Cardiac septum (tissue), 1 donor: ENCODE measurements at regions of chr4 and their contacts with region 1.

Region 1: GRCh38 chr4:147019061-147019460 is 73.4 kb upstream of the TTC29 start:
- DNase-seq: no peak

Region 2: DNA sequence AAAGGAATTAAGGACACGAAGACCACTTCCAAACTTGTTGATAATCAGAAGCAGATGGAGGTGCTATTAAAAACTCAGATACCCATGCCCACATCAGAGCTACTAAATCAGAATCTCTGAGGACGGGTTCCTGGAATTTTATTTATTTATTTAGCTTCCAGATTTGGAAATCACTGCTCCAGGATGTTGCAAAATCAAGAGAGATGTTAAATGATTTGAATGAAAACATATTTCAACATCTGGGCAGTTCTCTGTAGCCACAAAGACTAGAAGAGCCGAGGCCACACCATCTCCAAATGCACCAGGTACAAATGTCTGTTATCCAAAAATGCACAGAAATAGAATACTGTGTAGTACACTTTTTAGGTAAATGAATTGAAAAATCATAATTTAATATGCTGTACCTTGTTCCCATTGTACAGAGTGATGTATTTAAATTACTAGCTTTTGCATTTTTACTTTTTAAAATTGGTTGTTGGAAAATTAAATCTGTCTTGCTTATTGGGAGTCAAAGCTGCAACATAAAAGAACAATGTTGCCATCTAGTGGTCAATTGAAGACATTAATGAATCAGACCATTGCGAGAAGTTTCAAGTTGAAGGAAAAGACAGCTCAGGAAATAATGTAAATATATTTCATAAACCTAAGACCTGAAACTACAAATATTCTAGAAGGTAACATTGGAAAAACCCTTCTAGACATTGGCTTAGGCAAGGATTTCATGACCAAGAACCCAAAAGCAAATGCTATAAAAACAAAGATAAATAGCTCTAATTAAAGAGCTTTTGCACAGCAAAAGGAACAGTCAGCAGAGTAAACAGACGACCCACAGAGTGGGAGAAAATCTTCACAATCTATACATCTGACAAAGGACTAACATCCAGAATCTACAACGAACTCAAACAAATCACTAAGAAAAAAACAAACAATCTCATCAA is 77.9 kb after region 1 on chr4:
- intact Hi-C with region 1: loop called (anchors 1 kb)
- DNase-seq: no peak

Region 3: DNA sequence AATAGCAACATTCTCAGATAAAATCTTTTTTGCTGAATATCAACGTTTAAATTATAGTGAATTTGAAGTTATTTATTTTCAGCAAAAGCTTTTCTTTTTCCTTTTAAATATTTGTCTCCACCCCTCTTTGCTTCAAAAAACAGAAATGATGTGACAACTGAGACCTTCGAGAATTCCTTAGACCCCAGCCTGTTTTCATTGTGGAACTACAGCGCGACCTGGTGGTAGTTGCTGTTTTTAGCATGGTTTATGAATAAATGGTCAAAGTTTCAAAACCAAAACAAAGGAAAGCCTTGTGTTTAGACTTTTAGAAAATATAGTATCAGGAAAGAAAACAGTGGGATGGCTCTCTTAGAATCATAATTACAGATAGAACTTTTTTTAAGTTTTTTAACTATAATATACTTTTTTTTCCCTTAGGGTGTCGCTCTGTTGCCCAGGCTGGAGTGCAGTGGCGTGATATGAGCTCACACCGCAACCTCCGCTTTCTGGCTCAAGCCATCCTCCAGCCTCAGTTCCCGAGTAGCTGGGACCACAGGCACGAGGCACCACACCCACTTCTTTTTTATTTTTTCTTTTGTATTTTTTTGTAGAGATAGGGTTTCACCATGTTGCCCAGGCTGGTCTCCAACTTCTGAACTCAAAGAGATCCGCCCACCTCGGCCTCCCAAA is 571.3 kb after region 1 on chr4:
- intact Hi-C with region 1: loop called (anchors 5 kb)
- DNase-seq: no peak